ENCODE measurements at regions of chr9 and their contacts with region 1.

Region 1: GRCh38 chr9:136644598-136645351 is 17.9 kb upstream of the EGFL7 start:
- DNase-seq: peak; percentile 80
- H3K4me3 Mint-ChIP-seq: no peak overlapping the region
- H3K27ac Mint-ChIP-seq: no peak overlapping the region
- H3K4me1 Mint-ChIP-seq: no peaks in the 10 kb centered on the region
- H3K27me3 Mint-ChIP-seq: peaks cover 22% of the 10 kb centered on the region

Region 2: DNA sequence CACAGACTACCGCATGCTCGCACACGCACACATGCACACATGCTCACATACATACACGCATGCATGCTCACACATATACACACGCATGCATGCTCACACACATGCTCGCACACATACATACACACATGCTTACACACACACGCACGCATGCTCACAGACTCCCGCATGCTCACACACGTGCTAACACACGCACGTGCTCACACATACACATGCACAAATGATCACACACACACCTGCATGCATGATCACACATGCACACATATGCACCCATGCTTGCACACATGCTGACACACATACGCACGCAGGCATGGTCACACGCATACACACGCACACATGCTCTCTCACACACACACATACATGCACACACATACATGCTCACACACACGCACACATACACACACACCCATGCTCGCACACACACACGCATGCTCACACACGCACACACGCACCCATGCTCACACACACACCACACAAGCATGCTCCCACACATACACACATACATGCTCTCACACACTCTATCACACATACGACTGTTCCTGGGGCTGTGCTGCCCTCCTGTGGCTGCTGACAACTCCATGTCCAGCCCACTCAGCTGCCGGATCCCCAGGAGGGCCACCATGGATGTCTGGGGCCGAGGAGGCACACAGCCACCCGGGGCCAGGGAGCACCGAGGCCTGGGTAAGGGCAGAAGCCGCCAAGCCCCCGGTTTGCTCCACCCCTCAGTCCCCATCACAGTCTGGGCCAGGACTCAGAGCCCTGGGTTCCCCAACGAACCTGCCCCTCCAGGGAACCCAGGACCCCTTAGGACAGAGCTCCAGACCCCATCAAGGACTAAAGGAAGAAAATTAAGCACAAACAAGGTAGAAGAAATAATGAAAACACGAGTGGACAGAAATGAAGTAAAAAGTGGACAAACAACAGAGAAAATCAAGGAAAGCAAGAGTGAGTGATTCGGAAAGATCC is 13.5 kb before region 1 on chr9:
- CTCF ChIA-PET with region 1: interaction called, 6 read pairs
- POLR2A ChIA-PET with region 1: no interaction called
- intact Hi-C with region 1: loop called (anchors 2 kb)
- DNase-seq: peak; percentile 84
- H3K4me3 Mint-ChIP-seq: no peak overlapping the region
- H3K27ac Mint-ChIP-seq: no peak overlapping the region
- H3K4me1 Mint-ChIP-seq: no peaks in the 10 kb centered on the region
- H3K27me3 Mint-ChIP-seq: peaks cover 5% of the 10 kb centered on the region

Region 3: GRCh38 chr9:136671646-136672430 is 27.1 kb after region 1 on chr9:
- CTCF ChIA-PET with region 1: no interaction called
- POLR2A ChIA-PET with region 1: no interaction called
- intact Hi-C with region 1: no loop called
- DNase-seq: peak; percentile 48
- H3K4me3 Mint-ChIP-seq: no peak overlapping the region
- H3K27ac Mint-ChIP-seq: no peak overlapping the region
- H3K4me1 Mint-ChIP-seq: no peaks in the 10 kb centered on the region
- H3K27me3 Mint-ChIP-seq: peaks cover 5% of the 10 kb centered on the region